Mucosa of descending colon (tissue), 3 donors: ENCODE measurements at regions of chr11 and their contacts with region 1.

Region 1: DNA sequence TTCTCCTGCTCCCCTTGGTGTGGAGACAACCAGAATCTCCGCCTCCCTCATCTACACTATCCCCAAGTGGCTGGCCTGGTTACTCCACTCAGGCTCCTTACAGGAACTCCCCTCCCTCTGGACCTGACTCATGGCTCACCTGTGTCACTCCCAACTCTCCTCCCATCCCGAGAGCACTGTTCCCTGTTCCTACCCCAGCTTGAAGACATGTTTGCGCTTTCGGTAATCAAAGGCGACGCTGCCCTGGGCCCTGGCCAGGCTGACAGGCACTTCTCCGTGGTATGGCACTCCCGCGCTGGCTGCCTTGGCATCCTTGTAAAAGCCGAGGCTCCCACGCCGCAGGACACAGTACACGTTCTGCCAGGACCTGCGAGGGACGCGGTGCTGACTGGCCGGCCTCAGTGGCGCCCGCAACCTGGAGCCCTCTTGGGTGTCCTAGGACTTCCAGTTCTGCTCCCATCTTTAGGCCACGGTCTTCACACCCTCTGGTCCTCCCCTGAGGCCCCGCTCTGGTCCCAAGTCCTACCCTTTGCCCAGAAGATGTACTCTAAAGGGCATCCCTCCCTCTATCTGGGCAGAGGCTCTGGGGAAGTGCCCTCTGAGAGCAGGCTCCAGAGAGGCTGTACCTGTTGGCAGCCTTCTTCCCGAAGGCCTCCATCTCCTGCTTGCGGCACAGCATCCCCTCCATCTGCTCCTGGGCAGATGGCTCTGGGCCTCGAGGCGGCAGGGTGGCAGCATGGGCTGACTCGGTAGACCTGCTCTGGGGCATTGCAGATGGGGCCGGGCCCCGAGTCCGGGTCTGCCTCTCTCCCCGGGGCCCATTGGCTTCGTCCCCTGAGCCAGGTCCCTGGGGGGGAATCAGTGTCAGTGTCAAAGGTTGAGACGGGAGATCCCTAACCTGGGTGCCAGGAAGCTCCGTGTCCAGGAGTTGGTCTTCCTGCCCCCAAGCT is 9.4 kb upstream of the RBM4B start:
- DNase-seq: no peak
- ATAC-seq: no peak
- H3K4me3 ChIP-seq: no peak overlapping the region
- H3K4me1 ChIP-seq: no peaks in the 10 kb centered on the region
- CTCF ChIP-seq: no peak

Region 2: GRCh38 chr11:66418168-66418985 is 268.7 kb before region 1 on chr11:
- intact Hi-C with region 1: loop called in 1 of 2 experiments (anchors 10 kb)
- DNase-seq: peak in 2 of 3 donors; percentile 68 to 74
- ATAC-seq: peak; percentile 19
- H3K4me3 ChIP-seq: no peak overlapping the region
- H3K4me1 ChIP-seq: peaks cover 4% of the 10 kb centered on the region
- CTCF ChIP-seq: no peak

Region 3: GRCh38 chr11:66579017-66579606 is 108.0 kb before region 1 on chr11:
- intact Hi-C with region 1: loop called in 1 of 2 experiments (anchors 5 kb)
- DNase-seq: peak; percentile 67 to 84 (median 83)
- ATAC-seq: peak; percentile 87
- H3K4me3 ChIP-seq: no peak overlapping the region
- H3K4me1 ChIP-seq: no peaks in the 10 kb centered on the region
- CTCF ChIP-seq: peak; percentile 50